Activated CD4-positive, alpha-beta T cell treated with anti-CD3 and anti-CD28 coated beads, Interleukin-2, amount 10 ng/mL, durations not matched to agents 7 days and 5 days (primary cell): ENCODE measurements at regions of chr14 and their contacts with region 1.

Region 1: GRCh38 chr14:70816525-70816924 is 7.2 kb upstream of the MAP3K9 start:
- DNase-seq: no peak
- H3K4me3 Mint-ChIP-seq: no peak overlapping the region
- H3K27ac Mint-ChIP-seq: no peak overlapping the region
- H3K4me1 Mint-ChIP-seq: peaks cover 23% of the 10 kb centered on the region
- H3K27me3 Mint-ChIP-seq: peaks cover 14% of the 10 kb centered on the region

Region 2: GRCh38 chr14:70972107-70972976 is 155.8 kb after region 1 on chr14:
- CTCF ChIA-PET with region 1: interaction called, 12 read pairs
- POLR2A ChIA-PET with region 1: no interaction called
- DNase-seq: peak; percentile 89
- H3K4me3 Mint-ChIP-seq: no peak overlapping the region
- H3K27ac Mint-ChIP-seq: no peak overlapping the region
- H3K4me1 Mint-ChIP-seq: peaks cover 19% of the 10 kb centered on the region
- H3K27me3 Mint-ChIP-seq: no peaks in the 10 kb centered on the region